B cell (primary cell): ENCODE measurements at regions of chr12 and their contacts with region 1.

Region 1: GRCh38 chr12:66130277-66131066 is at the start of gene LLPH:
- DNase-seq: peak; percentile 90
- ATAC-seq: peak; percentile 90
- H3K4me3 ChIP-seq: peak within 1 kb of the TSS; percentile 72 to 100 (median 96)
- H3K4me3 Mint-ChIP-seq: peak within 1 kb of the TSS; percentile 98
- H3K27ac ChIP-seq: peak within 1 kb of the TSS; percentile 82 to 84
- H3K27ac Mint-ChIP-seq: peak within 1 kb of the TSS; percentile 94
- H3K4me1 ChIP-seq: peaks cover 17 to 20% of the 10 kb centered on the region in 2 donors
- H3K4me1 Mint-ChIP-seq: peaks cover 48% of the 10 kb centered on the region
- H3K27me3 ChIP-seq: no peaks in the 10 kb centered on the region
- H3K27me3 Mint-ChIP-seq: no peaks in the 10 kb centered on the region
- CTCF ChIP-seq: no peak
- total RNA-seq, gene LLPH: 21.1 and 23.4 TPM in 2 replicates

Region 2: GRCh38 chr12:64759035-64759901 is 1371.2 kb before region 1 on chr12 and contains the start of gene GNS:
- CTCF ChIA-PET with region 1: no interaction called
- POLR2A ChIA-PET with region 1: no interaction called
- intact Hi-C with region 1: loop called (anchors 2 kb)
- DNase-seq: peak; percentile 94
- ATAC-seq: peak; percentile 92
- H3K4me3 ChIP-seq: peak within 1 kb of the TSS; percentile 67 to 89 (median 84)
- H3K4me3 Mint-ChIP-seq: peak within 1 kb of the TSS; percentile 94
- H3K27ac ChIP-seq: peak within 1 kb of the TSS; percentile 48 to 86
- H3K27ac Mint-ChIP-seq: peak within 1 kb of the TSS; percentile 94
- H3K4me1 ChIP-seq: peaks cover 24 to 25% of the 10 kb centered on the region in 2 donors
- H3K4me1 Mint-ChIP-seq: peaks cover 41% of the 10 kb centered on the region
- H3K27me3 ChIP-seq: no peaks in the 10 kb centered on the region
- H3K27me3 Mint-ChIP-seq: no peaks in the 10 kb centered on the region
- CTCF ChIP-seq: no peak
- total RNA-seq, gene GNS: 26.7 and 31.7 TPM in 2 replicates

Region 3: DNA sequence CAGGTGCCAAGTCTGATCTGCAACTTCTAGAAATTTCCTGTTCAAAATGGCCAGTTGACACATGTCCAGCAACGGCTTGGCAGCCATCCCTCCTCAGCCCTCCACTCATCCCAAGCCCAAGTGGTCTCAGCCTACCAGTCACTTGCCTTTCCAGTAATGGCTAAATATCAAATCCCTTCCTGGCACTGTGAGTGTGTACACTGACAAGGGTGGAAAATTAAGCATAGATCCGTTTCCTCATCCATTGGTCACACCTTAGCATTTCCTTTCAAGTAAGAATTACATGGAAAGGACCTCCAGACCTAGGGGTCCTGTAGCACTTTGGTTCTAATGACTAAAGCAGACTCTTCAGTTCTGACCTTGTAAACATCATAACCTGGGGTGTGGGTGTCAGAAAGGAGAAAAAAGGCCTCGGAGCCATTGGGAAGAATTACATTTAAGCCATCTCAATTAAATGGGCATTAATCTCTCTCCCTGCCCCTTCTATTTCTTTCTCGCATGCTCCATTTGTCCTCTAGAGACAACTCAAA is 15.3 kb before region 1 on chr12:
- CTCF ChIA-PET with region 1: no interaction called
- POLR2A ChIA-PET with region 1: no interaction called
- intact Hi-C with region 1: no loop called
- DNase-seq: no peak
- ATAC-seq: no peak
- H3K4me3 ChIP-seq: no peak overlapping the region
- H3K4me3 Mint-ChIP-seq: no peak overlapping the region
- H3K27ac ChIP-seq: no peak overlapping the region
- H3K27ac Mint-ChIP-seq: no peak overlapping the region
- H3K4me1 ChIP-seq: no peaks in the 10 kb centered on the region
- H3K4me1 Mint-ChIP-seq: peaks cover 2% of the 10 kb centered on the region
- H3K27me3 ChIP-seq: no peaks in the 10 kb centered on the region
- H3K27me3 Mint-ChIP-seq: no peaks in the 10 kb centered on the region
- CTCF ChIP-seq: no peak

Region 4: DNA sequence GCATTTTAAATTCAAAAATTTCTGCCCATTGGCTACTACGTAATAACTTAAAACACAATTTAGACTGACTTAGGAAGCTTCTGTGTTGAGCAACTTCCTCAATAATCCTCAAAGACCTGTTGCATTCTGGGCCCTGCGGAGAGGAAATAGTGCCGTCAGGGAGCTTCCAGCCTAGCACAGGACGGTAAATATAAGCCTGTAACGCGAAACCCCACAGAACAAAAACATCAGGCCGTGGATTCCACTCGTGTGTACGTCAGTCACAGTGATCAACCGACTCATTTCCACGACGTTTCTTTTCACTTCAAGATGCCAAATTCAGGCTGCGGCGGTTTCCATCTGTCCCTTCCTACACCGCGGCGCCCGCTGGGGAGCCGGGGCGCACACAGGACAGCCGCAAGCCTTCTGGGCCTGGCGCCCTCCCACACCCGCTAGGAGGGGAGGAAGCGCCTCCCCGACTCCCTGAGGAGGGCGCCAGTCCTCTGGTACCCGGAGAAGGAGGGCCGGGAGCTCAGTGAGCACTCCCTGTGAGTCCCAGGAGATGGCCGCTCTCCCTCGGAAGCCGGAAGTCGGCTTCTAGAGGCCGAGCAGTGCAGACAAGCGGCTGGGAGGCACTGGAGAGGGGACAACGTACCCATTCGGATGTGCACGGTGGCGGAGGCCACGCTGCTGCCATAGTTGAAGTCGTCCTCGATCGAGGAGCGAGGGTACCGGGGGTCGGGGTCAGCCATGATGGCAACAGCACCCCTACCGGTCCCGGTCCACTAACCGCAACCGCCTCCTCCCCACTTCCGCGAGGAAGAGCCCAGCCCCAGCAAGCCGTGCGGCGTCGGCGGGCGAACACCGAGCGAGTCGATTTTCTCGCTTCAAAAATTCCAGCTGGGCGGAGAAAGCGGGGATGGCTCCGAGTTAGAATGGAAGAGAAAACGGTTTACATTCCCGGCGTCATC is 39.0 kb after region 1 on chr12 and contains the start of gene TMBIM4:
- CTCF ChIA-PET with region 1: interaction called, 11 read pairs
- POLR2A ChIA-PET with region 1: interaction called, 23 read pairs
- intact Hi-C with region 1: loop called (anchors 1 kb)
- DNase-seq: peak; percentile 94
- ATAC-seq: peak; percentile 83
- H3K4me3 ChIP-seq: peak within 1 kb of the TSS; percentile 73 to 99 (median 91)
- H3K4me3 Mint-ChIP-seq: peak within 1 kb of the TSS; percentile 89
- H3K27ac ChIP-seq: peak within 1 kb of the TSS; percentile 97
- H3K27ac Mint-ChIP-seq: peak within 1 kb of the TSS; percentile 93
- H3K4me1 ChIP-seq: peaks cover 21 to 30% of the 10 kb centered on the region in 2 donors
- H3K4me1 Mint-ChIP-seq: peaks cover 42% of the 10 kb centered on the region
- H3K27me3 ChIP-seq: no peaks in the 10 kb centered on the region
- H3K27me3 Mint-ChIP-seq: no peaks in the 10 kb centered on the region
- CTCF ChIP-seq: peak; percentile 40
- total RNA-seq, gene TMBIM4: 85.6 and 88.1 TPM in 2 replicates

Region 5: DNA sequence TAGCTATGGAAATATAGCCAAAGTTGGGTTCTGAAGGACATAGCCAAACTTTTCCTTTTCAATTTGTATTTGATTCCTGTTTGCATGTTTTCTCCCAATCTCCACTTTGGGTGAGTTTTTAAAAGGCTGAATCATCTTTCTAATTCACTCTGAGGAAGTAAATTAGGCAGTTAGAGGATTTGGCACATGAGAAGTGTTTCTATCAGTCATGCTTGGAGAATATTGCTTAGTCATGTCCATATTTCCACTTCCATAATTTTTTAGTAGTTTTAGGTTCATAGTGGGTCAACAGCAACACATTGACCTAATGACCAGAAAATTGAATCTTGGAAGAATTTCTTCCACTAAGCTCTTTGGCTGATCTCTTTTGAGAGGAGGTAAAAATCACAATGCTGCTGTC is 80.4 kb after region 1 on chr12:
- CTCF ChIA-PET with region 1: no interaction called
- POLR2A ChIA-PET with region 1: no interaction called
- intact Hi-C with region 1: no loop called
- DNase-seq: no peak
- ATAC-seq: no peak
- H3K4me3 ChIP-seq: no peak overlapping the region
- H3K4me3 Mint-ChIP-seq: no peak overlapping the region
- H3K27ac ChIP-seq: no peak overlapping the region
- H3K27ac Mint-ChIP-seq: no peak overlapping the region
- H3K4me1 ChIP-seq: peaks cover 5 to 8% of the 10 kb centered on the region in 2 donors
- H3K4me1 Mint-ChIP-seq: peaks cover 13% of the 10 kb centered on the region
- H3K27me3 ChIP-seq: no peaks in the 10 kb centered on the region
- H3K27me3 Mint-ChIP-seq: no peaks in the 10 kb centered on the region
- CTCF ChIP-seq: no peak

Region 6: GRCh38 chr12:66235626-66236281 is 105.3 kb after region 1 on chr12:
- CTCF ChIA-PET with region 1: no interaction called
- POLR2A ChIA-PET with region 1: no interaction called
- intact Hi-C with region 1: loop called (anchors 1 kb)
- DNase-seq: peak; percentile 34
- ATAC-seq: no peak
- H3K4me3 ChIP-seq: peak overlapping the region; percentile 36 to 76 (median 64)
- H3K4me3 Mint-ChIP-seq: peak overlapping the region; percentile 71
- H3K27ac ChIP-seq: no peak overlapping the region
- H3K27ac Mint-ChIP-seq: no peak overlapping the region
- H3K4me1 ChIP-seq: peaks cover 10 to 23% of the 10 kb centered on the region in 2 donors
- H3K4me1 Mint-ChIP-seq: peaks cover 33% of the 10 kb centered on the region
- H3K27me3 ChIP-seq: no peaks in the 10 kb centered on the region
- H3K27me3 Mint-ChIP-seq: no peaks in the 10 kb centered on the region
- CTCF ChIP-seq: peak; percentile 55

Region 7: DNA sequence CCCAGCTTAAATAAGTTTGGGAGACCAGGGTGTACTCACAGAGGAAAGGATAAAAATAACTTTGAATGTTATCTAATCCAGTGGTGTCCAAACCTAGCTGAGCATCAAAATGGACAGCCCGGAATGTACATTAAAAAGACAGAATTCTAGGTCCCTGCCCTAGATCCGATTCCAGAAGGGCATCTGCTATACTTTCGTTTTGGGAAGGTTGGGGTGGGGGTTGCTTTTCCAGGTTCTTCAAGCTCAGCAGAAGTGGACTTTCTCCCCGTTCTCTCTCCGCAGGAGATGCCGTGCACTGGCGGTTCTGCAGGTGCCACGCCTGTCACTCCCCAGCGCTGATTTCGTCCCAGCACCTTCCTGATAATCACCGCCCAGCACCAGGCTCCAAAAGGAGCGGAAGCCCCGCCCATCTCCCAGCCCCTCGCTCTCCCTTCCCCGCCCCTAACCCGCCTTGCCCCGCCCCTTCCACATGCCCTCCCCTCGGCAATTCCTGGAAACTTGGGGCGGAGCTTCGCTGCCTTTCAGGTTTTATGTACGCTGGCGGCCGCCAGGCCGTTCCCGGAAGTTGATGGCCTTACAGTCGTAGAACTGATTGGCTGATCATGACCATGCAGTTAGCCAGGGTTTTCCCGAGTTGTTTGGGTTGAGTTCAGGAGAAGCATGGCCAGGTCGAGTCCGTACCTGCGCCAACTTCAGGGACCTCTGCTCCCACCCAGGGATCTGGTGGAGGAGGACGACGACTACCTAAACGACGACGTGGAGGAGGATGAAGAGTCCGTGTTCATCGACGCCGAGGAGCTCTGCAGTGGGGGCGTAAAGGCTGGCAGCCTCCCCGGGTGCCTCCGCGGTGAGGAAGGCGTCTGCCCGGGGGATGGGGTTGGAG is 171.7 kb after region 1 on chr12 and contains the start of gene HELB:
- CTCF ChIA-PET with region 1: no interaction called
- POLR2A ChIA-PET with region 1: interaction called, 12 read pairs
- intact Hi-C with region 1: loop called (anchors 2 kb)
- DNase-seq: peak; percentile 92
- ATAC-seq: peak; percentile 95
- H3K4me3 ChIP-seq: peak within 1 kb of the TSS; percentile 69 to 99 (median 92)
- H3K4me3 Mint-ChIP-seq: peak within 1 kb of the TSS; percentile 99
- H3K27ac ChIP-seq: peak within 1 kb of the TSS; percentile 68
- H3K27ac Mint-ChIP-seq: peak within 1 kb of the TSS; percentile 94
- H3K4me1 ChIP-seq: peaks cover 10 to 15% of the 10 kb centered on the region in 2 donors
- H3K4me1 Mint-ChIP-seq: peaks cover 36% of the 10 kb centered on the region
- H3K27me3 ChIP-seq: no peaks in the 10 kb centered on the region
- H3K27me3 Mint-ChIP-seq: peaks cover 4% of the 10 kb centered on the region
- CTCF ChIP-seq: no peak
- total RNA-seq, gene HELB: 10.0 and 11.8 TPM in 2 replicates

Region 8: DNA sequence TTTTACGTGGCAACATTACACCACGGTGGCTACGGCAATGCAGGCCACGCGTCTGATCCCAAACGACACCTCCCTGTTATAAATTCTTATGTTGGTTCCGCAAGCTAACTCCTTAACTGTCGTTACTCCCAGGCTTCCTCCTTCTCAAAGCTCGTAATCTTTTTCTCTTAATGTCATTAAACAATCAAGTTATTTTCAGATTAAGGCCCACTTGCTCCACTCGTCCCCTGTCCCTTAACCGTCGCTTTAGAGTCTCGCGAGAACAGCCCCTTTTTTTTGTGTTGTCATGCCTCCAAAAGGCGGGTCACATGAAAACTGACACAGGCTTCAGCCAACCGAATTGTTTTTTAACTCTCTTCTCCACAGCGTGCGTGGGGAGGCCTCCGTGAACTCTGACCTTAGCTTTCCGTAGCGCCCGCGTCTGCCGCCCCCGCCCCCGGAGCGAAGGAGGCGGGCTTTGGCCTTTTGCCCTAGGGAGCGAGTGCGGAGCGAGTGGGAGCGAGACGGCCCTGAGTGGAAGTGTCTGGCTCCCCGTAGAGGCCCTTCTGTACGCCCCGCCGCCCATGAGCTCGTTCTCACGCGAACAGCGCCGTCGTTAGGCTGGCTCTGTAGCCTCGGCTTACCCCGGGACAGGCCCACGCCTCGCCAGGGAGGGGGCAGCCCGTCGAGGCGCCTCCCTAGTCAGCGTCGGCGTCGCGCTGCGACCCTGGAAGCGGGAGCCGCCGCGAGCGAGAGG is 1138.6 kb after region 1 on chr12 and contains the start of gene CAND1:
- CTCF ChIA-PET with region 1: no interaction called
- POLR2A ChIA-PET with region 1: interaction called, 6 read pairs
- intact Hi-C with region 1: loop called (anchors 10 kb)
- DNase-seq: peak; percentile 99
- ATAC-seq: peak; percentile 78
- H3K4me3 ChIP-seq: peak within 1 kb of the TSS; percentile 67 to 94 (median 80)
- H3K4me3 Mint-ChIP-seq: peak within 1 kb of the TSS; percentile 86
- H3K27ac ChIP-seq: peak within 1 kb of the TSS; percentile 90 to 94
- H3K27ac Mint-ChIP-seq: peak within 1 kb of the TSS; percentile 91
- H3K4me1 ChIP-seq: peaks cover 24 to 25% of the 10 kb centered on the region in 2 donors
- H3K4me1 Mint-ChIP-seq: peaks cover 34% of the 10 kb centered on the region
- H3K27me3 ChIP-seq: no peaks in the 10 kb centered on the region
- H3K27me3 Mint-ChIP-seq: no peaks in the 10 kb centered on the region
- CTCF ChIP-seq: no peak
- total RNA-seq, gene CAND1: 108 and 110 TPM in 2 replicates